ENCODE measurements at regions of chr6 and their contacts with region 1.

Region 1: DNA sequence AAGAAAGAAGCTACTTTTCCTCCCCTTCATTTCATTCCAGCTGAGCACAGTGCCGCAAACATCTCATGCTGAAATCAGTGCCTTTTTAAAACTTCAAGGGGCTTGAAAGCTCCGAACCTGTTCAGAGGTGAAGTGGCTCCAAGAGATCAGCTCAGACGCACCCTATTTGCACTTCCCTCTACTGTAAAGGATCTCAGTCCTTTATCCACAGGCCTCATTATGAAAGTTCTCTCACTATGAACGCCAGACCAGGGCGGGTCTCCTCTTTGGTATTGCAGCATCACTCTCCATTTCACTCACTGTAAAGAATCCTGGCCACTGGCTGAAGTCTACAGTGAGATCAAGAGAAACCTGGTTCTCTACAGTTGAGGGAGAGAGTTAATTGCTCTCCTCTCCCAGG is 232.7 kb upstream of the POU3F2 start:
- DNase-seq: no peak
- ATAC-seq: no peak
- H3K4me3 ChIP-seq: no peak overlapping the region
- H3K27ac ChIP-seq: no peak overlapping the region
- H3K4me1 ChIP-seq: no peaks in the 10 kb centered on the region
- H3K27me3 ChIP-seq: no peaks in the 10 kb centered on the region
- CTCF ChIP-seq: no peak

Region 2: DNA sequence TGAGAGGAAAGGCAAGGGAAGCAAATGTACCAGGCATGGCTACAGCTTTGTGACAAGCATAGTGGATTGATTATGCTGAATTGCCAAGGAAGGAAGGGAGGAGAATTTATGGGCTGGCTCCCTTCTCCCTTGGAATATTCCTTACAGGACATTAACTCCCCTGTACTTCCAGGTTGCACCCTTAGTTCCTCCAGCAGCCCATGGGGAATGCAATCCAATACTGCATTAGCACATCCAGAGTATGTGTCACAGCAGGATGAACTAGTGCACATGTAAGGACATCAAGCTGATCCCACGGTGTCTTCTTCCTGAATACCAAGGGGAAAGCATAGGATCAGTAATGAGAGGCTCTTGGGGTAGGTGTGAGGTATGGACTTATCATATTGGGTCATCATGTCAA is 158.1 kb before region 1 on chr6:
- intact Hi-C with region 1: no loop called
- DNase-seq: no peak
- ATAC-seq: no peak
- H3K4me3 ChIP-seq: no peak overlapping the region
- H3K27ac ChIP-seq: no peak overlapping the region
- H3K4me1 ChIP-seq: no peaks in the 10 kb centered on the region
- H3K27me3 ChIP-seq: no peaks in the 10 kb centered on the region
- CTCF ChIP-seq: no peak

Region 3: GRCh38 chr6:98641949-98642348 is 40.2 kb after region 1 on chr6:
- intact Hi-C with region 1: loop called in 1 of 10 experiments (anchors 1 kb)
- DNase-seq: no peak
- ATAC-seq: peak in 1 of 8 donors; percentile 31
- H3K4me3 ChIP-seq: no peak overlapping the region
- H3K27ac ChIP-seq: no peak overlapping the region
- H3K4me1 ChIP-seq: no peaks in the 10 kb centered on the region
- H3K27me3 ChIP-seq: no peaks in the 10 kb centered on the region
- CTCF ChIP-seq: no peak

Region 4: DNA sequence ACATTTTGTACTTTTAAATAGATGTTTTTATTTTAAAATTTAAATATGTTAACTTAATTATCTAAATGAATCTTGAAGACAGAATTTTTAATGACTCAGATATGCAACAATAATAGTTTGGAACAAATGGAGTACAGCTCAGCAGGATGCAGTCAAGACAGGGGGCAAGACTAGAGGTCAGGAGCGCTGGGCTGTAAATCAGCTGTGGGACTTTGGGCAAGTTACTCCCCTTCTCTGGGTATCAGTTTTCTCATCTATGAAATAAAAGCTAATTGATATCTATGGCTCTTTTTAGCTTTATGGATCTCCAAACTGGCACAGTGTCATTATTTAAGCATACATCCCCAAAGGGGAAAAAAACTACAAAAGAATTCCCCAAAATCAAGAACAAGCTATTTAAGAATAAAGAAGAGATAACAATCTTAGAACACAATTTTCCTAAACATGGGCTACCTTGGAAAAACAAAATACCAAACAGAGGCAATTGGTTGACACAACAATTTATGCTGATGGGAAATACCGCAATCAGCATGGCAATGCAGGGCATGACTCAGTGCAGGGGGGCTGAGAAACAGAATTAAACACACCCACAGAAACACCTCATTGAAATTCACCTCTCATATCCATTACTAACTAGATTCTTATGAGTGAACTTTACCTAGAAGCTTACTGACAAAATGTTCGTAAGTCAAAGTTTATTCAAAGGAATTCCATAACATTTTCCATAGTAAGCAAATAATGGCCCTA is 1674.8 kb after region 1 on chr6:
- intact Hi-C with region 1: loop called in 1 of 10 experiments (anchors 10 kb)
- DNase-seq: no peak
- ATAC-seq: no peak
- H3K4me3 ChIP-seq: no peak overlapping the region
- H3K27ac ChIP-seq: no peak overlapping the region
- H3K4me1 ChIP-seq: peaks cover 0 to 2% (median 0%) of the 10 kb centered on the region in 9 donors
- H3K27me3 ChIP-seq: peaks cover 0 to 15% (median 4%) of the 10 kb centered on the region in 7 donors
- CTCF ChIP-seq: no peak